Activated naive CD4-positive, alpha-beta T cell treated with anti-CD3 and anti-CD28 coated beads for 36 hours (primary cell): ENCODE measurements at regions of chr17 and their contacts with region 1.

Region 1: GRCh38 chr17:73192894-73193701 is at the start of gene COG1:
- DNase-seq: peak; percentile 91
- H3K4me3 Mint-ChIP-seq: peak within 1 kb of the TSS; percentile 95
- H3K27ac Mint-ChIP-seq: peak within 1 kb of the TSS; percentile 97
- H3K4me1 Mint-ChIP-seq: peaks cover 16% of the 10 kb centered on the region
- H3K27me3 Mint-ChIP-seq: no peaks in the 10 kb centered on the region
- total RNA-seq, gene COG1: 31.4 to 32.1 TPM

Region 2: DNA sequence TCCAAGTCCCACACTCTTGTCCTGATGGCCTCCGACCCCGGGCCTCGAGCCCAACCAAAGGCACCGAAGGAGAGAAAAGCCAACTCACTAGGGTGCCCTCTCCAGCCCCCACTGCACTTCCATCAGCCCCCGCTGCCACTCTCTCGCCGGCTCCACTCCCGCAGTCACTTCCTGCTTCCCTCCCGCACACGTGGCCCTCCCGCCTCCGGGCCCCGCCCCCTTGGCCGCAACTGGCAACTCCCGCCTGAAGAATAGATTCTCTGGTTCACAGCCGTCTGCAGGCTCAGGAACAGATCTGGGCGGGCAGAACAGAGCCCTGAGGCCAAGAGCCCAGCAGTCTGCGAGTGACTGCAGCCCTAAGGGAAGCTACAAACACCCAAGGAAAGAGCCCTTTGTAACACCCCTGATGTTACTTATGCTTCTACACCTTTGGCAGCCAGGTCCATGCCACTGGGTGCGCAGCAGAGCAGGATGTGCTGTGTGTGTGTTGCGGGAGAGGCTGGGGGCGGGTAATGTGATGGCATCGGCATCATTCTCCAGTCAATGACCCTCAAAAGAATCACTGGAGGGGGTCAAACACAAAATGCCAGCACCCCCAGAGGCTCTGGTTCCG is 100.5 kb before region 1 on chr17 and contains the start of gene SLC39A11:
- CTCF ChIA-PET with region 1: interaction called, 6 read pairs
- intact Hi-C with region 1: loop called (anchors 2 kb)
- DNase-seq: peak; percentile 92
- H3K4me3 Mint-ChIP-seq: peak within 1 kb of the TSS; percentile 99
- H3K27ac Mint-ChIP-seq: peak within 1 kb of the TSS; percentile 84
- H3K4me1 Mint-ChIP-seq: peaks cover 28% of the 10 kb centered on the region
- H3K27me3 Mint-ChIP-seq: no peaks in the 10 kb centered on the region
- total RNA-seq, gene SLC39A11: 14.0 to 16.4 TPM

Region 3: DNA sequence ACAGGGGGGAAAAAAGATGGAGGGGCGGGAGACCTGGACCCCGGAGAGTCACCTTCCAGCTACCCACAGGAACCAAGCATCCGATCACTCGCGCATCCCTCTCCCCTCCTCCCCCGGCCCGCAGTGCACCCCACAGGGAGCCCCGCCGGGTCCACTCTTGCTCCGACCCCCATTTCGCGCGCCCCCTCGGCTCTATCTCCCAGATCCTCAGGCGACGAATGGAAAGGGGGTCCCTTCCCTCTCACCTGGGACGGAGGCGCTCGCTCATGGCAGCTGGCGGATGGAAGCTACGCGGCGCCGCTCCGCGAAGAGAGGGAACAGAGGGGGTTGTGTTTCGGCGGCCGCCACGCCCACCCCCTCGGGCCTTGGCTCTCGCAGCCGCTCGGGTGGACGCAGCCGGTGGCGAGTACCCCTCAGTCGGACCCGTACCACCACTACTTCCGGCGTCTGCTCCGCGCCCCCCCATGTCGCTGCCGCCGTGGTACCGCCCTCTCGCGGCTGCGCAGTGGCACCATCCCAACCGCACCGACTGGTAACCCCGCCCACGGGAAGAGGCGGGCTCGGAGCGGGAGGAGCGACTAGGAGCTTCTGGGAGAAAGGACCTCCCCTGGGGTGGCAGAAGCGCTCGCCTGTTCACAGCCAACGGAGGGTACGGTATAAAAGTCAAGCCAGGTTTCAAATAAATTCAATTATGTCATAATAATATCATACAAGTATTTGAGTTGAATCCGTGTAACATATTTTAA is 38.9 kb after region 1 on chr17:
- CTCF ChIA-PET with region 1: interaction called, 8 read pairs
- intact Hi-C with region 1: loop called (anchors 1 kb)
- DNase-seq: peak; percentile 97
- H3K4me3 Mint-ChIP-seq: peak overlapping the region; percentile 96
- H3K27ac Mint-ChIP-seq: peak overlapping the region; percentile 94
- H3K4me1 Mint-ChIP-seq: peaks cover 64% of the 10 kb centered on the region
- H3K27me3 Mint-ChIP-seq: no peaks in the 10 kb centered on the region

Region 4: DNA sequence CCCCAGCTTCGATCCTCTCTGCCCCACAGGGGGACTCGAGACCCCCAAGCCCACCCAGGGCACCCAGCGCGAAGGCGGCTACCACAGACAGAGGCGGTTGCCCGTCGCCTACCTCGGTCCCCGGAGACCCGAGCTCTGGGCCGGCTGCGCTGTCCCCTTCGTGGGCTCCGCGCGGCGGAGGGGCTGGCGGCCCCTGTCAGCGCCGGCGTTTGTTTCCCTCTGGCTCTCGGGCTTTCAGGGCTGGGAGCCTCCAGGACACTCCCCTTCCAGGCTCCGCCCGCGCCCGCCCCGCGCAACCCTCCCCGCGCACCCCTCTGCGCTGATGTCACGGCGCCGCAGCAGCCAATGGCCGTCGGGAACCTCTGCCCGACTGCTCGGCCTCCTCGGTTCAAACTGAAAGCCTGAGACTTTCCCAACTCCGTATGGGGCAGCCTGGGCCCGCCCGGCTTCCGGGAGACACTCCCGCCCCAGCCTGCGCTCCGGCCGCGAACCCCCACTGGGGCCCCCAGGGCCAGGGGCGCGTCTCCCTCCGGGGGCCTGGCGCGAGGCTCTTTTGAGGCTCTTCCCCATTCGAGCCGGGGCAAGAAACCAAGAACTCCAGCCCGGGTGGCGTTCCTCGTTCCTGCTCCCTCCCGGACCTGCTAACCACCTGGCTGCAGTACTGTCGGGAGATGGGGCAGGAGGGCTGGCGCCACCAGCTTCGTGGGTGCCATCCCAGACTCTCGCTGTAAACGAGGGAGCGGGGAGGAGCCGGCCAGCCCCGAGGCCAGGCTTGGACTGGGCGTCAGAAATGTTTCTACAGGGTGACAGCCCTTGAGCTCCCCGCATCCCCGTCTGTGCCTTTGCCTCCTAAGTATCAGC is 118.9 kb after region 1 on chr17 and contains the start of gene CDC42EP4:
- CTCF ChIA-PET with region 1: no interaction called
- intact Hi-C with region 1: loop called (anchors 1 kb)
- DNase-seq: peak; percentile 91
- H3K4me3 Mint-ChIP-seq: peak within 1 kb of the TSS; percentile 80
- H3K27ac Mint-ChIP-seq: no peak within 1 kb of the TSS
- H3K4me1 Mint-ChIP-seq: peaks cover 10% of the 10 kb centered on the region
- H3K27me3 Mint-ChIP-seq: no peaks in the 10 kb centered on the region
- total RNA-seq, gene CDC42EP4: 1.7 to 2.1 TPM

Region 5: GRCh38 chr17:73855720-73856333 is 662.7 kb after region 1 on chr17:
- CTCF ChIA-PET with region 1: no interaction called
- intact Hi-C with region 1: no loop called
- DNase-seq: no peak
- H3K4me3 Mint-ChIP-seq: no peak overlapping the region
- H3K27ac Mint-ChIP-seq: no peak overlapping the region
- H3K4me1 Mint-ChIP-seq: peaks cover 14% of the 10 kb centered on the region
- H3K27me3 Mint-ChIP-seq: no peaks in the 10 kb centered on the region